A549 (cell line): ENCODE measurements at regions of chr1 and their contacts with region 1.

Region 1: DNA sequence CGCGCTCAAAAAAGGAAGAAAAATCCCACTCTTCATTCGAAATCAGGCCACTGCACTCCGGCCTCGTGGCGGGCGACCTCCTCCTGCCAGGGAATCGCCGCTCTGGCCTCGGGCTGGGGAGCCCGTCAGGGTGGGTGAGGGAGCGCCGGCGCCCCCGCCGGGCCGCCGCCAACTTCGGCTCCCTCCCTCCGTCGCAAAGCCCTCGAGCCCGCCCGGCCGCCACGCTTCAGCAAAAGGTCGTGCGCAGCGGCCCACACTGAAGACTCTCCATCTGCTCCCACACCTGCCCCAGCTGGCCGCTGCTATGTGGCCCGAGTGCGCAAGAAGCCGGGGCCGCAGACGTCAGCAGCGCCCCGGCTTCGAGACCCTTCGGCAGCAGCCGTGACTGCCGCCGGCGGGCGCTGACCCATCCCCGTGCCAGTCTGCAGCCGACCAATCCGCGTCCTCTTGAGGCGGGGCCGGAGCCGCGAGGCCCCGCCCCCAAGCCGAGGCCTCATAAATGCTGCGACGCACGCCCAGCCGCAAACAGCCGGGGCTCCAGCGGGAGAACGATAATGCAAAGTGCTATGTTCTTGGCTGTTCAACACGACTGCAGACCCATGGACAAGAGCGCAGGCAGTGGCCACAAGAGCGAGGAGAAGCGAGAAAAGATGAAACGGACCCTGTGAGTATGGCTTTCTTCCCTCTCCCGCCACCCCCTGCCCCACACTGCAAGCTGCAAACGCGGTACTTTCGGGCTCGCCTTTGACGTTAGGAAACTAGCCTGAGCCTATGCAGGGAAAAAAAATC is at the start of gene RGS2:
- DNase-seq: peak; percentile 88 to 93
- ATAC-seq: peak; percentile 91 to 96
- H3K4me3 ChIP-seq: peak within 1 kb of the TSS; percentile 63
- H3K27ac ChIP-seq: peak within 1 kb of the TSS; percentile 87 to 90
- H3K4me1 ChIP-seq: peaks cover 41% of the 10 kb centered on the region
- CTCF ChIP-seq: peak; percentile 39
- EP300 ChIP-seq: no peak
- POLR2A ChIP-seq: peak; percentile 99
- RAD21 ChIP-seq: peak; percentile 14 to 36; a peak in 2 of 5 replicates
- polyA plus RNA-seq, gene RGS2: 17.9 and 26.5 TPM in 2 replicates

Region 2: DNA sequence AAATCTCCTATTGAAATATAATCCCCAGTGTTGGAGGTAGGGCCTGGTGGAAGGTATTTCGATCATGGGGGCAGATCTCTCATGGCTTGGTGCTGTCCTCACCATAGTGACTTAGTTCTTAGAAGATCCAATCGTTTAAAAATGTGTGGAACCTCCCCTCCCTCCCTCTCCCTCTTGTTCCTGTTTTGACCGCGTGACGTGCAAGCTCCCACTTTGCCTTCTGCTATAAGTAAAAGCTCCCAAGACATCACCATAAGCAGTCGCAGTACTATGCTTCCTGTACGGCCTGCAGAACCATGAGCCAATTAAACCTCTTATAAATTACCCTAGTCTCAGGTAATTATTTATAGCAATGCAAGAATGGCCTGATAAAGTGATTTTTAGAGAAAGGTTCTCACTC is 10.8 kb before region 1 on chr1:
- CTCF ChIA-PET with region 1: interaction called, 12 read pairs
- POLR2A ChIA-PET with region 1: interaction called, 3 read pairs
- DNase-seq: no peak
- ATAC-seq: no peak
- H3K4me3 ChIP-seq: no peak overlapping the region
- H3K27ac ChIP-seq: no peak overlapping the region
- H3K4me1 ChIP-seq: no peaks in the 10 kb centered on the region
- CTCF ChIP-seq: no peak
- EP300 ChIP-seq: no peak
- POLR2A ChIP-seq: no peak
- RAD21 ChIP-seq: no peak

Region 3: GRCh38 chr1:192839164-192840035 is 30.7 kb after region 1 on chr1:
- CTCF ChIA-PET with region 1: no interaction called
- POLR2A ChIA-PET with region 1: no interaction called
- DNase-seq: no peak
- ATAC-seq: no peak
- H3K4me3 ChIP-seq: no peak overlapping the region
- H3K27ac ChIP-seq: no peak overlapping the region
- H3K4me1 ChIP-seq: no peaks in the 10 kb centered on the region
- CTCF ChIP-seq: no peak
- EP300 ChIP-seq: no peak
- POLR2A ChIP-seq: no peak
- RAD21 ChIP-seq: no peak

Region 4: GRCh38 chr1:193013005-193013404 is 204.3 kb after region 1 on chr1:
- CTCF ChIA-PET with region 1: interaction called, 85 read pairs
- POLR2A ChIA-PET with region 1: interaction called, 54 read pairs
- DNase-seq: no peak
- ATAC-seq: no peak; a peak in 1 of 6 replicates
- H3K4me3 ChIP-seq: no peak overlapping the region
- H3K27ac ChIP-seq: no peak overlapping the region
- H3K4me1 ChIP-seq: peaks cover 5% of the 10 kb centered on the region; the same call in 2 of the 3 replicates
- CTCF ChIP-seq: no peak
- EP300 ChIP-seq: no peak
- POLR2A ChIP-seq: no peak
- RAD21 ChIP-seq: no peak

Region 5: DNA sequence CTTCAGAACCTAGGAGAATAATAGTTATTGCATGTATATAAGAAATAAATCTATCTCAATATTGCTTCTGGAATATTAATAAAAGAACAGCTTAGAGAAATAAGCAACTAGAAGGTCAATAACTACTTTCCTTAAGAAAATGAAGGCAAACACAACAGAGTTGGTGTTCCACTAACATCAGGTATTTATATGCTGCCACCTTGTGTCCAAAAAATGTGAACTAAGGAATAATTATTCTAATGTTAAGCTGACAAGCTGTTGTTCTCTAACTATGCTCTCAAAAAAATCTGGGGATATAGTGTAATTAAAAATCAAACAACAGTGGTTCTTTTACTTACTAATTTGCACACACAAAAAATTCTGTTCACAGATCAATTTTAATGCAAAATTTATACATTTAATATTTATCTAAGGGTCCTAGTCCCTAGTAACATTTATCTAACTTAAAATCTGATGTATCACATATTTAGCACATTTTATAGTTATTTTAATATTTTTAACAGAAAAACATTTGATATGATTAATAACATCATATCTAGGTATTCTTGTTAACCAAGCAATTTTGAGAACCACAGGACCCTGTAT is 210.8 kb after region 1 on chr1:
- CTCF ChIA-PET with region 1: interaction called, 85 read pairs
- POLR2A ChIA-PET with region 1: interaction called, 54 read pairs
- DNase-seq: peak; percentile 25 to 63
- ATAC-seq: peak; percentile 59 to 80; a peak in 5 of 6 replicates
- H3K4me3 ChIP-seq: no peak overlapping the region
- H3K27ac ChIP-seq: peak overlapping the region in 1 of 2 experiments; percentile 6; a peak in 1 of 6 replicates
- H3K4me1 ChIP-seq: peaks cover 5% of the 10 kb centered on the region; the same call in 2 of the 3 replicates
- CTCF ChIP-seq: peak; percentile 86
- EP300 ChIP-seq: no peak
- POLR2A ChIP-seq: no peak
- RAD21 ChIP-seq: peak; percentile 77 to 82